ENCODE measurements at regions of chr14 and their contacts with region 1.

Region 1: DNA sequence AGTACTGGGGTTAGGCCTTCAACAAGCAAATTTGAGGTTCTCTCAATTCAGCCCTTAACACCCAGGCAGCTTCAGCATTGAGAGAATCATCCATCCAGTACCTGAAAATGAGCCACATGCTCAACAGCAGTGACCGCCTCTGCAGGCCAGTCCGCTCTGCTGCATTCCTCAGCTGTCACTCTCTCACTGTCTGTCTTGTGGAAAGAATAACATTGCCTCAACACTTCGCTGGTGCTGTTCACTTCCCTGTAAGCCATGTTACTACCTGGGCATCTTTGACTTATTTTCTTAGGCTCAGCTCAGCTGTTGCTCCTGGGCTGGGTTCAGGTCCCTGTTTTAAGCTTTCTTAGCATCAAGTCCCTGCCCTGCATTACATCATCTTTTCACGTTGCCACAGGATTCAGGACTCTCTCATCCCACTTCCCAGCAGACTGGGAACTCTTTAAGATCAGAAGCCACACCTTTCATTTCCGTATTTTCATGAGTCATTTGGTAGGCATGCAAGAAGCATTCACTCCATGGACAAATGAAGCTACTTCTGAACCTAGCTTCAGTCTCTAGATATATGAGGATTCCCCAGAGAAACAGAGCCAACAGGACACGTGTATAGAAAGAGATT is 726.6 kb downstream of the VRK1 start:
- DNase-seq: peak; percentile 68
- ATAC-seq: peak; percentile 38; the same call in 1 of the 2 replicates
- H3K4me3 ChIP-seq: no peak overlapping the region
- H3K27ac ChIP-seq: no peak overlapping the region
- H3K4me1 ChIP-seq: peaks cover 7% of the 10 kb centered on the region
- H3K27me3 ChIP-seq: peaks cover 48% of the 10 kb centered on the region
- CTCF ChIP-seq: no peak

Region 2: DNA sequence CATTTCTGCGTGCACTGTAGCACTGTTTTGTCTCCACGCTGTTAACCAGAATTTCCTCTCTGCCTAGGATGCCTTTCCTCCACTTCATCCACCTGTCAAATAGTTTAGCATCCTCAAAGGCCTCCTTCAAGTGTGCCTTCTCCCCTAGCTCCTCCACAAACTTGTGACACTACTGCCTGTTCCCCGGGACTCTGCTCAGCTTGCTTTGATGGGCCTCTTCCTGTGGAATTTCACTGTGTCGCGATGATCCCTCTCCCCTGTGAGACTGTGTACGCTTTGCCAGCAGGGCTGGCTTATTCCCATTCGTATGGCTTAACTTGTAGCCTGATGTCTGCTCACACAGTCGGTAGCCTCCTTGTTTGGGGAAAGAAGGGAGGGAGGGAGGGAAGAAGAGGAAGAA is 299.8 kb before region 1 on chr14:
- CTCF ChIA-PET with region 1: no interaction called
- POLR2A ChIA-PET with region 1: interaction called, 10 read pairs
- intact Hi-C with region 1: no loop called
- DNase-seq: no peak
- ATAC-seq: peak; percentile 33
- H3K4me3 ChIP-seq: no peak overlapping the region
- H3K27ac ChIP-seq: no peak overlapping the region
- H3K4me1 ChIP-seq: no peaks in the 10 kb centered on the region
- H3K27me3 ChIP-seq: peaks cover 96% of the 10 kb centered on the region
- CTCF ChIP-seq: no peak

Region 3: DNA sequence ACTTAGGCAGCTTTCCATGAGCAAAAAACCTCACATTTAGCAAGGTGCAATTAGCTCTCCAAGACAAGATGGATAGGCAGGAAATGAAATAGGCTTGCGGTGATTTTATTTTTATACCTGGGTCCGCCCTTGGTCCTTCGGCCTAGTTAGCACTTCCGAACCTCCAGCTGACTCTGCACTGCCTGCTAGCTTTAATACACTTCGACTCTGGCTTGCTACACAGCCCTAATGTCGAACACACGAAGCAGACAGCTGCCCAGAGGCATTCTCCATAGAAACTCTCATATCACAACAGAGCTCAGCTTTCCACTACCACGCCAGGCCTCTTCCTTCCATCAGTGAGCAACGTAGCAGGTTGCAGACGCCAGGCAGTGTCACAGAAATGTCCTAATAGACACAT is 38.6 kb before region 1 on chr14:
- CTCF ChIA-PET with region 1: no interaction called
- POLR2A ChIA-PET with region 1: no interaction called
- intact Hi-C with region 1: no loop called
- DNase-seq: no peak
- ATAC-seq: no peak
- H3K4me3 ChIP-seq: no peak overlapping the region
- H3K27ac ChIP-seq: no peak overlapping the region
- H3K4me1 ChIP-seq: no peaks in the 10 kb centered on the region
- H3K27me3 ChIP-seq: peaks cover 79% of the 10 kb centered on the region
- CTCF ChIP-seq: no peak

Region 4: DNA sequence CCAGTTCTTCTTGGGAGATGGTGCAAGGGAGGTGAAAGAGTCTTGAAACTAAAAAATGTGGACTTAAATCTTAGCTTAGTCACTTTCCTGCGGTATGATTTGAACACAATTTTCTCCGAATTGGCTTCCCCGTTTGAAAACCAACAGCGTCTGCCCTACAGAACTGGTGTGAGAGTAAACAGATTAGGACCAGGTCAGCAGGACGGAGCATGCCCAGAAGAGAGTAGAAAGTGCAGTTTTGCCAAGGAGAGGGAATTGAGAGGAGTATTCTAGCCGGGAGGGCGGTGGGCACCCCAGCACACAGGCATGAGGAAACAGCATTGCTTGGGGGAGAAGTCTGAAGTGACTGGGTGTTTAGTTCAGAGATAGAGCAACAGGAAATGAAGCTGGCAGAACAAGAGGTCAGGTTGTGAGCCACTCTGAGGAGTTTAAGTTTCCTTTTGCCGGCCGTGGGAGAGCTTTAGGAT is 200.5 kb after region 1 on chr14:
- CTCF ChIA-PET with region 1: no interaction called
- POLR2A ChIA-PET with region 1: no interaction called
- intact Hi-C with region 1: no loop called
- DNase-seq: no peak
- ATAC-seq: peak; percentile 42
- H3K4me3 ChIP-seq: peak overlapping the region; percentile 35; the same call in 1 of the 2 replicates
- H3K27ac ChIP-seq: no peak overlapping the region
- H3K4me1 ChIP-seq: peaks cover 6% of the 10 kb centered on the region; the same call in 1 of the 2 replicates
- H3K27me3 ChIP-seq: no peaks in the 10 kb centered on the region
- CTCF ChIP-seq: no peak

Region 5: GRCh38 chr14:97978341-97978740 is 454.5 kb after region 1 on chr14:
- CTCF ChIA-PET with region 1: no interaction called
- POLR2A ChIA-PET with region 1: no interaction called
- intact Hi-C with region 1: no loop called
- DNase-seq: peak; percentile 68
- ATAC-seq: peak; percentile 91
- H3K4me3 ChIP-seq: peak overlapping the region; percentile 56; the same call in 1 of the 2 replicates
- H3K27ac ChIP-seq: peak overlapping the region; percentile 59
- H3K4me1 ChIP-seq: peaks cover 5% of the 10 kb centered on the region; the same call in 1 of the 2 replicates
- H3K27me3 ChIP-seq: no peaks in the 10 kb centered on the region
- CTCF ChIP-seq: peak; percentile 57